ENCODE measurements at regions of chr6 and their contacts with region 1.

Region 1: GRCh38 chr6:149028767-149029405 is 282.1 kb downstream of the UST start:
- DNase-seq: no peak
- H3K4me3 ChIP-seq: no peak overlapping the region
- H3K27me3 ChIP-seq: peaks cover 1% of the 10 kb centered on the region; the same call in 1 of the 2 replicates
- CTCF ChIP-seq: peak; percentile 49

Region 2: DNA sequence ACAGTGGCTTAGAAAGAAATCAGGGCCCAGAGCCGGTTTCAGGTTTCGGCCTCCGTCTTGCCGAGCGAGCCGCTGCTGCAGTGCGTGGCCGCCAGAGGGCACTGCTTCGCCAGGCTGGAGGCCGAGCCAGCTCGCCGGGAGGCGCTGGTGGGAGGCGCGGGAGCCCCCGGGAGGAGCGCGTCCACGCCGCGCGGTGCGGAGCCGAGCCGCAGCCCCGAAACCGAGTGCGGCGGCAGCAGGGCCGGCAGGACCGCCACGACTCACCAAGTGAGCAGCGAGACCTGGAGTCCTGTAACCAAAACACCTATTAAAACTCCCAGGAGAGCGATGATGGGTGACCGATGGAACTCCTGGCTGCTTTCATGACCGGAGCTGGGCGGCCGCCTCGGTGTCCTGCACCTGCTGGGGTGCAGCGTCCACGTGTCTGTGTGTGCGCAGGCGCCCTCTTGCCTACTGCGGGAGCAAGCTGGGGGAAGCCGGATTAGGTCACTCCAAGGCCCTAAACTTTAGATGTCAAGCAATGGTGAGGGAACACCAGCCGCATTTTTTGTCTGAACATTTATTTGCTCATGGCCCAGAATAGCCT is 468.9 kb before region 1 on chr6:
- CTCF ChIA-PET with region 1: interaction called, 18 read pairs
- POLR2A ChIA-PET with region 1: no interaction called
- DNase-seq: no peak
- H3K4me3 ChIP-seq: peak overlapping the region; percentile 48
- H3K27me3 ChIP-seq: no peaks in the 10 kb centered on the region
- CTCF ChIP-seq: peak; percentile 90

Region 3: DNA sequence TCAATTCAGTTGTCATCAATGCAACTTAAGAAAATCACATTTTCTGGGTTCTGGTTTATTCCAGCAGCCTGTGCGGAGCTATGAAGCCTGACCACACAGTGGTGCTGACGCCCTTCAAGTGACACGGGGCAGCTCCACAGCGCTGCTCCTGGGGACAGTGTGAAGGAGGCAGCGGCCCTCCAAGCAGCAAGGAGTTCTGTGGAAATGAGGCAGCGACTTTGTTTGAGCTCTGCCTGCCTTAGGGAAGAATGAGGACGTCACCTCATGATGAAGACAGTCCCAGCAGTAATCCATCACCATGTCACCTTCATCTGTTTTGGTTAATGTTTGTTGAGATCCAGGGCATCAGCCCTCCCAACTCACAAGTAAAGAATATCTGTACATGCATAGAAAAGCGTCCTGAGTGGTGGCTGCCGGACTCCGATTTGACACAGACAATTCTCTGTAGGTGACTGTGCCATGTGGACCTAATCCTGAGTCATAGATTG is 450.6 kb before region 1 on chr6:
- CTCF ChIA-PET with region 1: interaction called, 38 read pairs
- POLR2A ChIA-PET with region 1: interaction called, 13 read pairs
- DNase-seq: no peak
- H3K4me3 ChIP-seq: no peak overlapping the region
- H3K27me3 ChIP-seq: no peaks in the 10 kb centered on the region
- CTCF ChIP-seq: peak; percentile 92

Region 4: GRCh38 chr6:149082286-149082707 is 53.4 kb after region 1 on chr6:
- CTCF ChIA-PET with region 1: interaction called, 10 read pairs
- POLR2A ChIA-PET with region 1: interaction called, 3 read pairs
- DNase-seq: no peak
- H3K4me3 ChIP-seq: no peak overlapping the region
- H3K27me3 ChIP-seq: no peaks in the 10 kb centered on the region
- CTCF ChIP-seq: peak; percentile 79

Region 5: GRCh38 chr6:149513915-149514314 is 485.0 kb after region 1 on chr6:
- CTCF ChIA-PET with region 1: interaction called, 28 read pairs
- POLR2A ChIA-PET with region 1: no interaction called
- DNase-seq: no peak
- H3K4me3 ChIP-seq: no peak overlapping the region
- H3K27me3 ChIP-seq: no peaks in the 10 kb centered on the region
- CTCF ChIP-seq: no peak